Astrocyte of the cerebellum (primary cell): ENCODE measurements at regions of chr14 and their contacts with region 1.

Region 1: GRCh38 chr14:69629225-69630127 is 18.1 kb downstream of the SUSD6 start:
- DNase-seq: no peak
- H3K4me3 ChIP-seq: no peak overlapping the region
- CTCF ChIP-seq: no peak

Region 2: GRCh38 chr14:69675877-69676416 is 46.5 kb after region 1 on chr14:
- in situ Hi-C with region 1: loop called (anchors 5 kb)
- DNase-seq: no peak
- H3K4me3 ChIP-seq: no peak overlapping the region
- CTCF ChIP-seq: no peak

Region 3: GRCh38 chr14:69701857-69702256 is 72.4 kb after region 1 on chr14:
- in situ Hi-C with region 1: loop called (anchors 5 kb)
- DNase-seq: no peak
- H3K4me3 ChIP-seq: no peak overlapping the region
- CTCF ChIP-seq: no peak

Region 4: DNA sequence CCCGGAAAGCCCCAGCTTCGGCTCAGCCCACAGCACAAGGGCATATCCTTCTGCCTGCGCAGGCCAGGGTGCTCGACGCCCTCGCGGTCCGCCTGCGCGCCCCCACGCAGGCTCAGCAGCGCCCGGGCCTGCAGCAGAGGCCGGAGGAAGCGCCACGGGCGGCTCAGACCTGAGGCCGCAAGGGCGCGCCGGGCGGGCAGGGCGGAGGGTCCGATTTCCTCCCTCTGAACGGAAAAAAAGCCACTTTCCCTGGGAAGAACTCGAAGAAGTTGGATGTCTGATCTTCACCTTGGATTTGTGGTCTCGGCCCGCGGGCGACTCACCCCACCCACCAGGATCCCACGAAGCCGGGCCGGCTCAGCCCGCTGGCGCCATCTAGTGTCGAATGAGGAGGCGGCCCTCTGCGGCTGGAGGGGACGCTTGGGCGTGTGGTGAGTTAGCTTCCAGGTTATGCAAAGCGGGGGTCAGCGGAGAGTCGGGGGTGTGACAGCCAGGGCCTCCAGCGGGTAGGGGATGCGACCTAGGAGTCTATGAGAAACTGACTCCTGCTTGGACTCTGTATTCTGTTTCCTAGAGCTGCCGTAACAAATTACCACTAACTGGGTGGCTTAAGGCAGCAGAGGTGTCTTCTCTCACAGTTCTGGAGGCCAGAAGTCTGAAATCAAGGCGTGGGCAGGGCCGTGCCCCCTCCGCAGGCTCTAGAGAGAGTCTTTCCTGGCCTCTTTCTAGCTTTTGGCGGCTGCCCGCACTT is 97.5 kb after region 1 on chr14:
- in situ Hi-C with region 1: no loop called
- DNase-seq: peak; percentile 36
- H3K4me3 ChIP-seq: peak overlapping the region; percentile 15
- CTCF ChIP-seq: peak; percentile 97